GM13977 (cell line): ENCODE measurements at regions of chr7 and their contacts with region 1.

Region 1: DNA sequence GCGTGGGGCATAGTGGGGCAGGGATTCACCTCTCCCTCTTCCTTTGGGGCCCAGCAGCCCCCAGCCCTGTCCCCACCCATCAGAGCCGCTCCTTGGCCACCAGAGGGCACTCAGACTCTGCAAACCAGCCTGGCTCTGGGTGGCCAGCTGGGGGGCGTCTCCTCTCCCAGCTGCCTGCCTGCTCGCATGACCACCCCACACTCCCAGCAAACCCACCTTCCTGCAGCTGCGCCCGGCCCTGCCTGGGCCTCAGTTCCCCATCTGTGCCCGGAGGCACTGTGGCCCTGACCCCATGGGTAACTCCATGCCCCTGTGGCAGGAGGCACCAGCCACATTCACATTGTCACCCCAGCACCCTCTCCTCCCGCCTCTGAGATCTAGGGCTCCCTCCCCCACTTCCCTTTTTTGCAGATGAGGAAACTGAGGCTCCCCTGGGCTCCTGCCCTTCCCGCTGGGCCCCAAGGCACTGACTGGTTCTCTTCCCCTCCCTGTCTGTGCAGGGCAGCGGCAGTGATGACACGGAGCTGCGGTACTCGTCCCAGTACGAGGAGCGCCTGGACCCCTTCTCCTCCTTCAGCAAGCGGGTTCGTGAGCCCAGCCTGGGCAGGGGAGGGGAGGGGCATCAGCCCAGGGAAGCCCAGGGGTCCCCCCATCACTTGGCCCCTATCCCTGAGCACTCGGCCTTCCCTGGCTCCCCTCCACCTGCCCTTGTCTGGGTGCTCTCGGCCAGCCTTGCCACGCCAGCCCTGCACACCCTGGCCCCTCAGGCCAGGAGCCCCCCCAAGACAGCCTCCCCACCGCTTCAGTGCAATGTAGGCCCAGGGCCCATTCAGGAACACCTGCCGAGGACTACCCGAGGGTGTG is 6.9 kb upstream of the SH2B2 start:
- DNase-seq: peak; percentile 87
- CTCF ChIP-seq: peak; percentile 93

Region 2: DNA sequence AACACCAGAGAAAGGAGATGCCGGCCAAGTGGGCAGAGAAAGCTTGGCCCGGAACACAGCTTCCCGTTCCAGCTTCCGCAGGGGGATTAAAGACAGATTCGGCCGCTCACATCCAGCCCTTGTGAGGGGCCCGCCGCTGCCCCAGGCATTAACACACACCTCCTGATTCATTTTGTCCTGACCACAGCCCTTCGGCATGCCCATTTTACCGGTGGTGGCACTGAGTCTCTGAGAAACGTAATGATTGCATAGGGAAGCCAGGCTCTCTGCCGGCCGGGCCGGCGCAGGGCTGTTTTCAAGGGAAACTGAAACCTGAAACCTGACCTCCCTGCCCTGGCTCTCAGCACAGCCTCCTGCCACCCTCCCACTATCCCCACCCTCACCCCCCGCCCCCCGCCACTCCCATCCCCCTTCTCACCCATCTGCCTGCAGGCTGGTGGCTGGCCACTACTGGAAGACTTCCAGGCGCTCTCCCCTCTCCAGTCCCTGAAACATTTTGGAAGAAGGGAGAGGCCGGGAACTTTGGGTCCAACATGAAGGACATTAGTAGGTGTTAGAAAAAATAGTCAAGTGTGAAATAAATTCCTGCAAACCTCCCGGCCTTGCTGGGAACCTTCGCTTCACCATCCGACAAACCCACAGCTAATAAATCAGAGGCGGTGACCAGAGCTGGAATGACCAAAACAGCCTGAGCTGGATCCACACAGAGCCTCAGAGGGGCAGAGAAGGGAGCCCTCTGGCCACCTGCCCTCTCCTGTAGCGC is 545.9 kb before region 1 on chr7:
- in situ Hi-C with region 1: no loop called
- DNase-seq: no peak
- CTCF ChIP-seq: no peak

Region 3: GRCh38 chr7:102390697-102391484 is 111.1 kb after region 1 on chr7:
- in situ Hi-C with region 1: loop called (anchors 5 kb)
- DNase-seq: peak; percentile 62
- CTCF ChIP-seq: peak; percentile 82